ENCODE measurements at regions of chr2 and their contacts with region 1.

Region 1: DNA sequence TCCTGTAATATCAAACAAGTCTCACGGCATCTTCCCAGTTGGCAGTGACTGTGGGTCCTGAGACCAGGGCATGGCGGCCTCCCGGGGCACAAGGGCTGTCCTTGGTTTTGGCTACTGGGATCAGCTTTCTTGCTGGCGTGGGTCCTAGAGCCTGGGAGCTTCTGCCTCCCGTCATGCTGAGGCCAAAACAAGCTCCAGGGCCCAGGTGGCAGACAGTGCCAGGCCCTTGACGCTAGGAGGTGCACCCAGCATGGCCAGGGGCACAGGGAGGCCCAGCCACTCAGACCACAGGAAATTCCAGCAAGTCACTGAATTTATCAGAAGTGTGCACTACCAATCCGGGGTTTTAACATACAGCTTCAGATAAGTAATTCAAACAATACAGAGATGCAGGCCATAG is 184.7 kb downstream of the EIPR1 start:
- DNase-seq: peak; percentile 71 to 87
- ATAC-seq: peak; percentile 85 to 98
- H3K4me3 ChIP-seq: no peak overlapping the region
- H3K27ac ChIP-seq: peak overlapping the region in 1 of 4 donors; percentile 4
- H3K4me1 ChIP-seq: no peaks in the 10 kb centered on the region
- H3K27me3 ChIP-seq: no peaks in the 10 kb centered on the region
- CTCF ChIP-seq: peak in 3 of 5 experiments; percentile 29 to 33 (median 29)
- POLR2A ChIP-seq: no peak

Region 2: GRCh38 chr2:3034856-3035255 is 158.1 kb before region 1 on chr2:
- in situ Hi-C with region 1: no loop called
- intact Hi-C with region 1: no loop called
- DNase-seq: no peak
- ATAC-seq: no peak
- H3K4me3 ChIP-seq: no peak overlapping the region
- H3K27ac ChIP-seq: no peak overlapping the region
- H3K4me1 ChIP-seq: no peaks in the 10 kb centered on the region
- H3K27me3 ChIP-seq: no peaks in the 10 kb centered on the region
- CTCF ChIP-seq: no peak
- POLR2A ChIP-seq: no peak

Region 3: GRCh38 chr2:3303583-3304406 is 110.9 kb after region 1 on chr2:
- in situ Hi-C with region 1: no loop called
- intact Hi-C with region 1: loop called (anchors 2 kb)
- DNase-seq: peak; percentile 64 to 73
- ATAC-seq: peak; percentile 96 to 98
- H3K4me3 ChIP-seq: peak overlapping the region; percentile 45 to 56 (median 49)
- H3K27ac ChIP-seq: peak overlapping the region; percentile 13 to 62 (median 25)
- H3K4me1 ChIP-seq: peaks cover 5 to 6% of the 10 kb centered on the region in 2 donors
- H3K27me3 ChIP-seq: no peaks in the 10 kb centered on the region
- CTCF ChIP-seq: peak; percentile 85 to 97 (median 89)
- POLR2A ChIP-seq: no peak